ENCODE measurements at regions of chr2 and their contacts with region 1.

Region 1: GRCh38 chr2:147449323-147449991 is 395.4 kb upstream of the ACVR2A start:
- DNase-seq: peak; percentile 73 to 84 (median 80)
- H3K4me3 ChIP-seq: peak overlapping the region in 1 of 2 donors; percentile 3
- H3K4me3 Mint-ChIP-seq: peak overlapping the region; percentile 59 to 82 (median 72)
- H3K27ac ChIP-seq: peak overlapping the region; percentile 84
- H3K27ac Mint-ChIP-seq: peak overlapping the region; percentile 95 to 99 (median 97)
- H3K4me1 ChIP-seq: peaks cover 21% of the 10 kb centered on the region
- H3K4me1 Mint-ChIP-seq: peaks cover 11 to 35% (median 23%) of the 10 kb centered on the region in 4 donors
- H3K27me3 ChIP-seq: no peaks in the 10 kb centered on the region
- H3K27me3 Mint-ChIP-seq: no peaks in the 10 kb centered on the region

Region 2: DNA sequence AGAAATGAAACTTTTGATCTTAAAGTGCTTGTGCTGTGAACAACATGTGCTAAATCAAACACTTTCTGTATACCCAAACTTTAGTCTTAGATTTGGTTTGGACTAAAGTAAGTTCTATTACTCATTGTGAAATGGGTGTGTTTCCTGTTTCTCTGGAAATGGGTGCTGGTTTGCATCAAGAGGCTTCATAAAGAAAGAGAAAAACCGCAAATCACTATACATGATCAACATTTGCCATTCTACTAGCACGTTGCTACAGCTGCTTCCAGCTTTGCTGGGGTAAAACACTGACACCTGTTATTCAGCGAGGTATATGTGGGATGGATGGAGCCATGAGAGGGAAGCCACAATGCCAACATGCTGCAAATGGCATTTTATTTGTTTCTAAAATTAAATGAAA is 151.6 kb before region 1 on chr2:
- CTCF ChIA-PET with region 1: no interaction called
- POLR2A ChIA-PET with region 1: interaction called, 3 read pairs
- intact Hi-C with region 1: loop called (anchors 10 kb)
- DNase-seq: peak; percentile 60 to 67 (median 64)
- H3K4me3 ChIP-seq: no peak overlapping the region
- H3K4me3 Mint-ChIP-seq: peak overlapping the region in 7 of 8 donors; percentile 27 to 79 (median 64)
- H3K27ac ChIP-seq: peak overlapping the region; percentile 25
- H3K27ac Mint-ChIP-seq: peak overlapping the region; percentile 79 to 97 (median 89)
- H3K4me1 ChIP-seq: peaks cover 72% of the 10 kb centered on the region
- H3K4me1 Mint-ChIP-seq: peaks cover 56 to 83% (median 65%) of the 10 kb centered on the region in 4 donors
- H3K27me3 ChIP-seq: no peaks in the 10 kb centered on the region
- H3K27me3 Mint-ChIP-seq: no peaks in the 10 kb centered on the region

Region 3: GRCh38 chr2:147416099-147416498 is 33.4 kb before region 1 on chr2:
- CTCF ChIA-PET with region 1: no interaction called
- POLR2A ChIA-PET with region 1: no interaction called
- intact Hi-C with region 1: no loop called
- DNase-seq: no peak
- H3K4me3 ChIP-seq: no peak overlapping the region
- H3K4me3 Mint-ChIP-seq: no peak overlapping the region
- H3K27ac ChIP-seq: no peak overlapping the region
- H3K27ac Mint-ChIP-seq: no peak overlapping the region
- H3K4me1 ChIP-seq: no peaks in the 10 kb centered on the region
- H3K4me1 Mint-ChIP-seq: peaks cover 0 to 5% (median 3%) of the 10 kb centered on the region in 4 donors
- H3K27me3 ChIP-seq: no peaks in the 10 kb centered on the region
- H3K27me3 Mint-ChIP-seq: peaks cover 0 to 3% of the 10 kb centered on the region in 2 donors

Region 4: GRCh38 chr2:147490401-147491261 is 41.2 kb after region 1 on chr2:
- CTCF ChIA-PET with region 1: no interaction called
- POLR2A ChIA-PET with region 1: no interaction called
- intact Hi-C with region 1: loop called (anchors 5 kb)
- DNase-seq: peak in 4 of 5 donors; percentile 33 to 44 (median 40)
- H3K4me3 ChIP-seq: no peak overlapping the region
- H3K4me3 Mint-ChIP-seq: peak overlapping the region; percentile 1 to 84 (median 74)
- H3K27ac ChIP-seq: no peak overlapping the region
- H3K27ac Mint-ChIP-seq: peak overlapping the region; percentile 3 to 85 (median 75)
- H3K4me1 ChIP-seq: peaks cover 35% of the 10 kb centered on the region
- H3K4me1 Mint-ChIP-seq: peaks cover 28 to 46% (median 36%) of the 10 kb centered on the region in 4 donors
- H3K27me3 ChIP-seq: no peaks in the 10 kb centered on the region
- H3K27me3 Mint-ChIP-seq: no peaks in the 10 kb centered on the region

Region 5: GRCh38 chr2:147515213-147515612 is 65.8 kb after region 1 on chr2:
- CTCF ChIA-PET with region 1: no interaction called
- POLR2A ChIA-PET with region 1: no interaction called
- intact Hi-C with region 1: no loop called
- DNase-seq: no peak
- H3K4me3 ChIP-seq: no peak overlapping the region
- H3K4me3 Mint-ChIP-seq: no peak overlapping the region
- H3K27ac ChIP-seq: no peak overlapping the region
- H3K27ac Mint-ChIP-seq: no peak overlapping the region
- H3K4me1 ChIP-seq: no peaks in the 10 kb centered on the region
- H3K4me1 Mint-ChIP-seq: peaks cover 8 to 31% (median 13%) of the 10 kb centered on the region in 4 donors
- H3K27me3 ChIP-seq: no peaks in the 10 kb centered on the region
- H3K27me3 Mint-ChIP-seq: no peaks in the 10 kb centered on the region